H1 (cell line): ENCODE measurements at regions of chr12 and their contacts with region 1.

Region 1: DNA sequence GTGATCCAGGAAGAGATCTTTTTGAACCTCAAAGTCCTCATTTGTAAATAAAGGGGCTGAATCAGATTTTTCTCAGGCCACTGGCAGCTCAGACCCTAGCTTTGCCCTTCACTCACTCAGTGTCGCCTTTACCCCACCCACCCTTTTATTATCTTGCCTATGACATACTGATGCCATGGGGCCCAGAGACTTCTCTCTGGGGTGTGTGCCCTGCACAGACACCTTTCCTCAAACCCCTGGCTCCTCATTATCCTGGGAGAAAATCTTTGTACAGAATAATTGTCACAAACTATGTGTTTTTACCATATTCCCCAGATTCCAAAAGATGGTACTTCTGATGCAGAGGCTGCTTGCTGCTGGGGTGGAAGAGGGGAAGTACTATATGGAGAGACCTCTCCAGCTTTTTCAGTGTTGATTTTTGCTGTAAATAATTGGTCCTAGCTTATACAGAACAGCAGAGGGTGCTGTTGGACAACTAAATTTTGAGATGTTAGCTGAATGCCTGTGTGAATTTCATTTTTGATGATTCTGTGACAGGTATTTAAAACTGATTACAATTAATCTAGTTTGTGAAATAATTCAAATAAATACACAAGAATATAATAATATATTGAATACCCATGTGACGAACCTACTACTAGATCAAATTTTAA is 53.9 kb upstream of the DCD start:
- DNase-seq: no peak
- H3K4me3 ChIP-seq: no peak overlapping the region
- H3K27ac ChIP-seq: no peak overlapping the region
- H3K4me1 ChIP-seq: no peaks in the 10 kb centered on the region
- H3K27me3 ChIP-seq: no peaks in the 10 kb centered on the region
- CTCF ChIP-seq: peak in 2 of 3 experiments; percentile 43 to 55; a peak in 2 of 4 replicates
- EP300 ChIP-seq: no peak
- POLR2A ChIP-seq: no peak
- RAD21 ChIP-seq: peak; percentile 79

Region 2: GRCh38 chr12:54658306-54659264 is 43.5 kb before region 1 on chr12:
- CTCF ChIA-PET with region 1: interaction called, 38 read pairs
- POLR2A ChIA-PET with region 1: interaction called, 3 read pairs
- DNase-seq: peak; percentile 53 to 87
- H3K4me3 ChIP-seq: peak overlapping the region in 1 of 4 experiments; percentile 7; a peak in 1 of 8 replicates
- H3K27ac ChIP-seq: no peak overlapping the region
- H3K4me1 ChIP-seq: peaks cover 0 to 6% (median 1%) of the 10 kb centered on the region in 4 experiments; a peak in 5 of 7 replicates
- H3K27me3 ChIP-seq: peaks cover 0 to 2% (median 0%) of the 10 kb centered on the region in 4 experiments; a peak in 3 of 7 replicates
- CTCF ChIP-seq: peak; percentile 76 to 95 (median 88)
- EP300 ChIP-seq: no peak
- POLR2A ChIP-seq: no peak
- RAD21 ChIP-seq: peak; percentile 76 to 84

Region 3: GRCh38 chr12:54689984-54690383 is 12.1 kb before region 1 on chr12:
- CTCF ChIA-PET with region 1: interaction called, 42 read pairs
- POLR2A ChIA-PET with region 1: no interaction called
- DNase-seq: peak in 1 of 2 experiments; percentile 25
- H3K4me3 ChIP-seq: no peak overlapping the region
- H3K27ac ChIP-seq: no peak overlapping the region
- H3K4me1 ChIP-seq: peaks cover 0 to 1% (median under 1%) of the 10 kb centered on the region in 4 experiments; a peak in 3 of 7 replicates
- H3K27me3 ChIP-seq: no peaks in the 10 kb centered on the region; a peak in 1 of 7 replicates
- CTCF ChIP-seq: peak; percentile 33 to 83 (median 66)
- EP300 ChIP-seq: no peak
- POLR2A ChIP-seq: no peak
- RAD21 ChIP-seq: peak; percentile 40 to 52

Region 4: DNA sequence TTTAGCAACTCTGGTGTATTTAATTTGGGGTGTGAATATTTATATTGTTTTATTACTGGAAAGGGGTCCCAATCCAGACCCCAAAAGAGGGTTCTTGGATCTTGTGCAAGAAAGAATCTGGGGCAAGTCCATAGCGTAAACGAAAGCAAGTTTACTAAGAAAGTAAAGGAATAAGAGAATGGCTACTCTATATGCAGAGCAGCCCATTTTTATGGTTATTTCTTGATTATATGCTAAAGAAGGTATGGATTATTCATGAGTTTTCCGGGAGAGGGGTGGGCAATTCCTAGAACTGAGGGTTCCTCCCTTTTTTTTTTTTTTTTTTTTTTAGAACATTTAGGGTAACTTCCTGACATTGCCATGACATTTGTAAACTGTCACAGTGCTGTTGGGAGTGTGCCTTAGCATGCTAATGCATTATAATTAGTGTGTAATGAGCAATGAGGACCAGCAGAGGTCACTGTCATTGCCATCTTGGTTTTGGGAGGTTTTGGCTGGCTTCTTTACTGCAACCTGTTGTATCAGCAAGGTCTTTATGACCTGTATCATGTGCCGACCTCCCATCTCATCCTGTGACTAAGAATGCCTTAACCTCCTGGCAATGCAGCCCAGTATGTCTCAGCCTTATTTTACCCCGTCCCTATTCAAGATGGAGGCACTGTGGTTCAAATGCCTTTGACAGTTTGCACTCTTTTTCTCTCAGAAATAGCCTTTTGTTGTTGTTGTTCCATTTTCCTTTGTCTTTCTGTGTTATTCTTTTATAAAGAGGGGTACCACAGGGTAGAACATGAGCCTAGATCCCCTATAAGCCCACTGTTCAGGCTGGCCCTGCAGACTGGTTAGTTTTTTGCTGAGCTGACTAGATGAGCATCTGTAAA is 21.6 kb after region 1 on chr12:
- CTCF ChIA-PET with region 1: interaction called, 20 read pairs
- POLR2A ChIA-PET with region 1: no interaction called
- DNase-seq: no peak
- H3K4me3 ChIP-seq: no peak overlapping the region
- H3K27ac ChIP-seq: no peak overlapping the region
- H3K4me1 ChIP-seq: peaks cover 0 to 5% (median 3%) of the 10 kb centered on the region in 4 experiments; a peak in 2 of 7 replicates
- H3K27me3 ChIP-seq: no peaks in the 10 kb centered on the region
- CTCF ChIP-seq: peak in 2 of 3 experiments; percentile 59 to 68; a peak in 3 of 4 replicates
- EP300 ChIP-seq: no peak
- POLR2A ChIP-seq: no peak
- RAD21 ChIP-seq: peak; percentile 21 to 39; a peak in 3 of 4 replicates

Region 5: GRCh38 chr12:54759751-54760150 is 57.7 kb after region 1 on chr12:
- CTCF ChIA-PET with region 1: interaction called, 18 read pairs
- POLR2A ChIA-PET with region 1: no interaction called
- DNase-seq: peak; percentile 25 to 44
- H3K4me3 ChIP-seq: no peak overlapping the region
- H3K27ac ChIP-seq: no peak overlapping the region
- H3K4me1 ChIP-seq: no peaks in the 10 kb centered on the region
- H3K27me3 ChIP-seq: no peaks in the 10 kb centered on the region
- CTCF ChIP-seq: peak in 2 of 3 experiments; percentile 73 to 90; a peak in 3 of 4 replicates
- EP300 ChIP-seq: no peak
- POLR2A ChIP-seq: no peak
- RAD21 ChIP-seq: peak; percentile 93 to 97

Region 6: GRCh38 chr12:54958048-54958658 is 256.1 kb after region 1 on chr12:
- CTCF ChIA-PET with region 1: interaction called, 22 read pairs
- POLR2A ChIA-PET with region 1: no interaction called
- DNase-seq: no peak
- H3K4me3 ChIP-seq: no peak overlapping the region
- H3K27ac ChIP-seq: no peak overlapping the region
- H3K4me1 ChIP-seq: peaks cover 0 to 5% (median 0%) of the 10 kb centered on the region in 4 experiments; a peak in 2 of 7 replicates
- H3K27me3 ChIP-seq: no peaks in the 10 kb centered on the region
- CTCF ChIP-seq: peak in 2 of 3 experiments; percentile 61 to 70; a peak in 2 of 4 replicates
- EP300 ChIP-seq: no peak
- POLR2A ChIP-seq: no peak
- RAD21 ChIP-seq: peak; percentile 94 to 97